ENCODE measurements at regions of chr22 and their contacts with region 1.

Region 1: DNA sequence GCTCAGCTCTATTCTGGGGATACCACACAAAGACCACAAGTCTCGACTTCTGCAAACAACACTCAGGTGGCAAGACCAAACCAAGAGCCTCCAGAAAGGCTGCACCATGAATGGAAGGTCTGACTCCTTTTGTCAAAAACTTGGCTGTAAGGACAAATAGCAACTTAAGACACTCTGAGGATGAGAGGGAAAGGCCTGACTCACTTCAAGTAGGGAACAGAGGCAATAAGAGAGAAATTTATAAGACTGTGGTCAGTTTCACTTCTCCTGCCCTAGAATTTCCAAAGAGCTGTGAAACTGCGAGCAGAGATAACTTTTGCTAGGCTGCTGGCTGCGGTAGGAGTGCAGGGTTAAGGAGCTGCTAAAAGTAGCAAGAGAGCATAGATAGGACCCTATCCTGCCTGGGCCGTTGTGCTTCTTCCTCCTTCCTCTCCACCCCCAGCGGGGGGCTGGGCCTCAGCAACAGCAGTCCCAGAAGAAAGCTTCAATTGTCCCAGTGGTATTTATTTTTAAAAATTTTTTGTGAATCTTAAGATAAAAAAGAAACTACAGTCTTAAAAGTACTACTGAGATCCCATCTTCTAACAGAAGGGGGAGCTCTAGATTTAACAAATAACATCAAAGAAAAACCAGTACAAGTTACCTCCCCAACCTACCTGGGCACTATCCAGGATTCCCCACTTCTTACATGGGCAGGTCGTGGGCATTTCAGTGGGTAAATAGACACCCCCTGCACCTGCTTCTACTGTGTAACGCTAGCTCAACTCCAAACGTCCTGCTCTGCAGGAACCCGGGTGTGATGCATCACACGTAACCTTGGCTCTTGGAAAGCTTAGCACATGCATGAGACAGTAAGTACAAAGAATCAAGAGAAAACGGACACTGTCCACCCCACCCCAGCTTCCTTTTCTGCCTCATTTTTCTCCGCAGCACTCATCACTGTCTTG is 66.4 kb downstream of the SGSM3 start:
- DNase-seq: peak; percentile 50
- ATAC-seq: peak; percentile 71
- H3K4me3 Mint-ChIP-seq: peak overlapping the region; percentile 17
- H3K27ac Mint-ChIP-seq: peak overlapping the region; percentile 83
- H3K4me1 Mint-ChIP-seq: peaks cover 61% of the 10 kb centered on the region
- H3K27me3 Mint-ChIP-seq: no peaks in the 10 kb centered on the region
- CTCF ChIP-seq: peak; percentile 78

Region 2: GRCh38 chr22:40263191-40263590 is 173.6 kb before region 1 on chr22:
- CTCF ChIA-PET with region 1: no interaction called
- POLR2A ChIA-PET with region 1: no interaction called
- intact Hi-C with region 1: no loop called
- DNase-seq: no peak
- ATAC-seq: peak; percentile 43
- H3K4me3 Mint-ChIP-seq: no peak overlapping the region
- H3K27ac Mint-ChIP-seq: peak overlapping the region; percentile 63
- H3K4me1 Mint-ChIP-seq: peaks cover 51% of the 10 kb centered on the region
- H3K27me3 Mint-ChIP-seq: no peaks in the 10 kb centered on the region
- CTCF ChIP-seq: no peak

Region 3: DNA sequence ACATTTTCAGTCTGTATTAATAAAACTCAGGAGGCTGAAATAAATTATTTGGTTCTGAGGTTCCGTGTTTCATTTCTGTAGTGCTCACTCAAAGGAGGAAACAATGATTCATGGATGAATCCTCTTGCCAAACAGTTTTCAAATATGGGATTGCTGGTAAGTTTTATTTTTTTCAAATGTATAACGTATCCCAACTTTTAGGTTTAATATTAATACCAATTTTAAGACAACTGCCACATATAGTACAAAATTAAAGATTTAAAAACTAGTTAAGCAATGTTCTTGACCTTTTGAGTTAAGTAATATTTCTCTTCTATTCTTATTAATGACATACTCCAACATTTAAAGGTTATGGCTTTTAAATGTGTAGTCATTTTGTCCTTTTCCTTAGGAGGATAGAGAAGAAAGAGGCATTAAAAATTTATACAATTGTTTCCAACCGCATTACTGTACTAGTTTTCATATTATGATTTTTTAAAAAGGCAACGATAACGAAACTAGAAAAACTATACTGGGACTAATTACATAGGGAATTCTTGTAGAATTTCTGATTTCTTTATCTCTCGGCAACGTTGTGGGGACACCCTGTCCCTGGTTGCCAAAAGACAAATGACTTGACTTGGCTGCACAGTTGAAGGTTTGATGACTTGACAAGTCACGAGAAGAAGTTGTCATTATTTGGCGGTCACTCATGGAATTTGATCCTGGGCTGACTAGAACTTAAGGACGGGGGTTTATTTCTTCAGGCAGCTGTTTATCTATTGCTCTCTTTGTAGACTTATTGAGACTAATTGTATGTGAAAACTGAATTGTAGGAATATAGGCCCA is 159.6 kb before region 1 on chr22:
- CTCF ChIA-PET with region 1: no interaction called
- POLR2A ChIA-PET with region 1: no interaction called
- intact Hi-C with region 1: no loop called
- DNase-seq: no peak
- ATAC-seq: peak; percentile 6
- H3K4me3 Mint-ChIP-seq: no peak overlapping the region
- H3K27ac Mint-ChIP-seq: peak overlapping the region; percentile 98
- H3K4me1 Mint-ChIP-seq: peaks cover 49% of the 10 kb centered on the region
- H3K27me3 Mint-ChIP-seq: no peaks in the 10 kb centered on the region
- CTCF ChIP-seq: no peak

Region 4: GRCh38 chr22:40352763-40353162 is 84.0 kb before region 1 on chr22:
- CTCF ChIA-PET with region 1: no interaction called
- POLR2A ChIA-PET with region 1: no interaction called
- intact Hi-C with region 1: no loop called
- DNase-seq: no peak
- ATAC-seq: no peak
- H3K4me3 Mint-ChIP-seq: no peak overlapping the region
- H3K27ac Mint-ChIP-seq: no peak overlapping the region
- H3K4me1 Mint-ChIP-seq: peaks cover 17% of the 10 kb centered on the region
- H3K27me3 Mint-ChIP-seq: no peaks in the 10 kb centered on the region
- CTCF ChIP-seq: no peak

Region 5: DNA sequence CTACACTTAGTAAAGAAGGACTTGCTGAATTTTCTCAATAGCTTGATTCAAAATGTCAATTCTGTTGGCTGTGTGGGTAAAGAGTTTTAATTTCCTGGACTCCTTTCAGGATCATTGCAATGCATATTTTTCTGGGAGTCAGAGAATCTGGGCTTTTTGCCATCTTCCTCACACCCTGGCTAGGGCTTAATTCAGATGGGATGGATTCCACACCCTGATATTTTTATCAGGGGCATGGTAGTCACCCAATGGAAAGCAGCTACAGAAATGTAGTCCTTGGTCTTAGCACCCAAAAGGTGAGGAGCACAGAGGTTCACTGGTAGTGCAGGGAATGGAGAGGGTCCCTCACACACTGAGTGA is 12.9 kb after region 1 on chr22:
- CTCF ChIA-PET with region 1: interaction called, 27 read pairs
- POLR2A ChIA-PET with region 1: interaction called, 7 read pairs
- intact Hi-C with region 1: no loop called
- DNase-seq: no peak
- ATAC-seq: no peak
- H3K4me3 Mint-ChIP-seq: no peak overlapping the region
- H3K27ac Mint-ChIP-seq: no peak overlapping the region
- H3K4me1 Mint-ChIP-seq: peaks cover 69% of the 10 kb centered on the region
- H3K27me3 Mint-ChIP-seq: no peaks in the 10 kb centered on the region
- CTCF ChIP-seq: no peak

Region 6: GRCh38 chr22:40479126-40479800 is 42.5 kb after region 1 on chr22:
- CTCF ChIA-PET with region 1: interaction called, 139 read pairs
- POLR2A ChIA-PET with region 1: no interaction called
- intact Hi-C with region 1: no loop called
- DNase-seq: no peak
- ATAC-seq: no peak
- H3K4me3 Mint-ChIP-seq: no peak overlapping the region
- H3K27ac Mint-ChIP-seq: no peak overlapping the region
- H3K4me1 Mint-ChIP-seq: peaks cover 24% of the 10 kb centered on the region
- H3K27me3 Mint-ChIP-seq: no peaks in the 10 kb centered on the region
- CTCF ChIP-seq: peak; percentile 38

Region 7: GRCh38 chr22:40525249-40525884 is 88.6 kb after region 1 on chr22:
- CTCF ChIA-PET with region 1: interaction called, 18 read pairs
- POLR2A ChIA-PET with region 1: no interaction called
- intact Hi-C with region 1: no loop called
- DNase-seq: peak; percentile 85
- ATAC-seq: peak; percentile 69
- H3K4me3 Mint-ChIP-seq: no peak overlapping the region
- H3K27ac Mint-ChIP-seq: no peak overlapping the region
- H3K4me1 Mint-ChIP-seq: peaks cover 43% of the 10 kb centered on the region
- H3K27me3 Mint-ChIP-seq: no peaks in the 10 kb centered on the region
- CTCF ChIP-seq: peak; percentile 91

Region 8: DNA sequence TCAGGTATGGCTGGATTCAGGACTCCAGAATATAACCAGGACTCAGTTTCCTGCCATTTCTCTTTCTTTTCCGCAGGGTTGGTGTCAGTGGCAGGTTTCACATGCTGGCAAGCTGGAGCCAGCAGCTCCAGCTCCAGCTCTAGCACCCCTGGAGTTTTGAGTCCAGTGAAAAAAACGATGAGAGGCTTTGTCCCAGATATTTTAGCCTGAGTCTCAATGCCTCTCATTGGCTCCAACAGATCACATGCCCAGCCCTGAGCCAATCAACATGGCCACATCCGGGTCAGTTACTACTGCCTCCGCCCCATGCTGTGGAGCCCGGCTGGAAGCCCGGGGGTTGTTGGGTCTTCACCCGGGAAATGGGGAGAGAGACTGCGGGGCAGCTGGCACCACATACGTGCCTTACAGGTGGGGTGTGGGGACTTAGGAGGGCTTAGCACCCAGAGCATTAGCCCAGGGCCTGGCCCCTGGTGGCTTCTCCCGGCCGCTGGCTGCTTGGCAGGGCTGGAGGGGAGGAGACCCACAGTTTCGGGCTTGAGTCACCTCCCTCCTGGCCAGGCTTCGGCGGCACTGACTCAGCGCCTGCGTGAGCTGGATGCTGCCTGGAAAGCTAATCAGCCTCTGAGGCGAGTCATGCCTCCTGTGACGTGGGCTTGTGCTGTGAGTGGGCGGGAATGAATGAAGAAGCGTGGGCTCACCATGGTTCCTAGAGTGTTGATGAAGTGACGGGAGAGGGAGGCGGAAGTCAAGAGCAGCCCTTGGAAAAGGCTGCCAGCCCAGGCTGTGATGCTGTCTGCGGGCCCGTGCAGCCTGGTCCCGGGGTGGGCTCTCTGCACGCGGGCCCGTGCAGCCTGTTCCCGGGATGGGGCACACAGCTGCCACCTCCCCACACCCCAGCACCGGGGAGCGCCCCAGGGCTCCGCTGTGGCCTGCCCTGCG is 215.1 kb after region 1 on chr22:
- CTCF ChIA-PET with region 1: interaction called, 127 read pairs
- POLR2A ChIA-PET with region 1: interaction called, 3 read pairs
- intact Hi-C with region 1: loop called (anchors 5 kb)
- DNase-seq: peak; percentile 95
- ATAC-seq: peak; percentile 98
- H3K4me3 Mint-ChIP-seq: peak overlapping the region; percentile 56
- H3K27ac Mint-ChIP-seq: peak overlapping the region; percentile 88
- H3K4me1 Mint-ChIP-seq: peaks cover 13% of the 10 kb centered on the region
- H3K27me3 Mint-ChIP-seq: no peaks in the 10 kb centered on the region
- CTCF ChIP-seq: no peak